Heart left ventricle (tissue), 16 donors: ENCODE measurements at regions of chr12 and their contacts with region 1.

Region 1: DNA sequence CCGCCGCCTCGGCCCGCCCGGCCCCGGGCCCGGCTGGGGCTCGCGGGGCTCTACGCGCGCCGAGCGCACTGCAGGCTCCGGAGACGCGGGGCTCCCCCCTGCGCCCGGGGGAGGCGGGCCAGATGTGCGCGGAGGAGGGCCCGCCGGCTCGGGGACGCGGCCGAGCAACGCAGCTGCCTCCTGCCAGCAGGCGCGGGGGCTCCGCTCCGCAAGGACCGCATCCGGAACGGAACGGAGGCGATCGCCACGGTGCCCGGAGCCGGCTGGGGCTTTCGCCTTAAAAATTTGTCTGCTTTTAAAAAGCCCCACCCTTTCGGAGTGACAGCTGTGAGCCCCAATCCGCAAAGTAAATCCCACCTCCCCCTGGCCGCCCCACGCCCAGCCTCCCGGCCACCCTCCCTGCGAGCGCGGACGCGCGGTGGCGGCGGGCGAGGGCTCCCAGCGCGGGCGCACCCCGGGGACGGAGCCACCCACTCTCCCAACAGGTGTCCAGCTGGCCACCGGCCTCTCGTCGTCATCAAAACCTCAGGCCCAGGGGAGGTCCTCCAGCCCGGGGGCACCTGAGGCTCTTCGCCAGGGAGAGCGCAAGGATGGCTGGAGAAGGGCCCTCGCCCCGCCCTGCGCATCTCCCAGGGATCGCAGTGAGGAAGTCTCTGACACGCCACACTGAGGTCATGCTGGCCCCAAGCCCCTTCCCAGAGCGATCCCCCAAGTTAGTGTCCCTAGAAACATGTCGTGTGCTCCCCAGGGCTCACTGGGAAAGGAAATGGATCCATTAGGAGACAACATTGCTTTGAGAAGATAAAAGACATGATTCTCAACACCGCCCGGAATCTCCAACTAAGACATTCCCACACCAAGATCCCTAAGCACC is at the start of gene TMEM132D:
- DNase-seq: no peak
- ATAC-seq: no peak
- H3K4me3 ChIP-seq: peak within 1 kb of the TSS in 1 of 12 donors; percentile 16
- H3K27ac ChIP-seq: no peak within 1 kb of the TSS
- H3K4me1 ChIP-seq: peaks cover 0 to 13% (median 0%) of the 10 kb centered on the region in 12 donors
- H3K27me3 ChIP-seq: peaks cover 17 to 72% (median 34%) of the 10 kb centered on the region in 9 donors
- CTCF ChIP-seq: no peak
- POLR2A ChIP-seq: no peak
- total RNA-seq, gene TMEM132D: not detected

Region 2: DNA sequence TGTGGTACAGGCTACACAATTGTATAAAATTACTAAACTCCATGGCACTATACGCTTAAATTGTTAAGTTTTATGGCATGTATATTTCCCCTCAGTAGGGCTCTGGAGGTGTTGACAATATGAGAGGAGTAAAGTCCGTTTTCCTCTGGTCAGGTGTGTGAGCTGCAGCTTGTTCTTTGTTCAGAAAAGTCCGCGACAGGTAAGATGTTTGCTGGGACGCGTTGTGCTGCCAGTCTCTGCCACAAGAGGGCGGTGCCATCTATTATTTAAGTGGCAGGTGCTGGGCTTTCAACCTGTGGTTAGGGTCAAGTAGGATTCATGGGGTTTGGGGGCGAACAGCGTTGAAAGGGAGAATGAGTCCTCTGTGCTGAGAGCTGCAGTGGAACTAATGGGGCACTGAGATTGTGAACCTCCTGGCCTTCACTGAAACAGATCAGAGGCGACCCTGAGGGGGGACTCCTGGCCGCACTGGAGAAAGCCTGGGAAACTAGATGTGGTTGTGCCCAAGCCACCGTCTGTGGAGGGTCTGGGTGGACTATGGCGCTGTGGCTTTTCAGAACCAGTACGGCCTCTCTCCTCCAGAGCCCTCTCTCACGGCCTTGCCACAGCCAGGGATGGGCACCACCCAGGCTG is 1259.4 kb before region 1 on chr12:
- intact Hi-C with region 1: loop called in 1 of 10 experiments (anchors 10 kb)
- DNase-seq: no peak
- ATAC-seq: no peak
- H3K4me3 ChIP-seq: no peak overlapping the region
- H3K27ac ChIP-seq: no peak overlapping the region
- H3K4me1 ChIP-seq: no peaks in the 10 kb centered on the region
- H3K27me3 ChIP-seq: no peaks in the 10 kb centered on the region
- CTCF ChIP-seq: peak; percentile 13 to 58 (median 44)
- POLR2A ChIP-seq: no peak

Region 3: GRCh38 chr12:129949651-129950050 is 45.5 kb after region 1 on chr12:
- intact Hi-C with region 1: no loop called
- DNase-seq: no peak
- ATAC-seq: no peak
- H3K4me3 ChIP-seq: no peak overlapping the region
- H3K27ac ChIP-seq: no peak overlapping the region
- H3K4me1 ChIP-seq: no peaks in the 10 kb centered on the region
- H3K27me3 ChIP-seq: no peaks in the 10 kb centered on the region
- CTCF ChIP-seq: no peak
- POLR2A ChIP-seq: no peak